ENCODE measurements at regions of chr15 and their contacts with region 1.

Region 1: DNA sequence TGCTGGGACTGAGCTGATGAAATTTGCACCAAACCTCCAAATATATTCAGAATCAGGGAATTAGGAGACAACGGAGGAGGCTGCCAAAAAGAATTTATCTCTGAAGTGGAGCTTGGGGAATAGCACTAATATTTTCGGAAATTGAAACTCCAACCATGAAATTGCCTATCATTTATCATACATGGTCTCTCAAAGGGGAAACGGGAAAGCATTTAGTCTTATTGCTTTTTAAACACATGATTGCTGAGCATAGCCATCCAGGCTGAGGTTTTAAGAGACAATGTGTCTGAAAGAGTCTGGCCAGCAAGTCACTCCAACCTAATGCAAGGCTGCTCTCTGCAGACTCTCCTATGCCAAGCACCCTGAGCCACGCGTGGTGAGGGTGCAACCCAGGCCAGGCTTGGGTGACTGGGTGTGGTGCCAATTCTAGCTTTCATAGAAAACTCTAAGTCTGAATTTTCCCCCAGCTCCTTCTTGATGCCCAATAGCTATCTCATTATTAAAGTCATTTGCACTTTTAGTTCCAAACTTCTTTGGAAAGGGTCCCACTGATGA is 200.2 kb downstream of the RPLP1 start:
- DNase-seq: no peak
- H3K4me3 ChIP-seq: no peak overlapping the region
- H3K27ac ChIP-seq: no peak overlapping the region
- H3K4me1 ChIP-seq: no peaks in the 10 kb centered on the region
- H3K27me3 ChIP-seq: peaks cover 0 to 4% of the 10 kb centered on the region in 2 donors
- CTCF ChIP-seq: peak; percentile 50 to 67

Region 2: DNA sequence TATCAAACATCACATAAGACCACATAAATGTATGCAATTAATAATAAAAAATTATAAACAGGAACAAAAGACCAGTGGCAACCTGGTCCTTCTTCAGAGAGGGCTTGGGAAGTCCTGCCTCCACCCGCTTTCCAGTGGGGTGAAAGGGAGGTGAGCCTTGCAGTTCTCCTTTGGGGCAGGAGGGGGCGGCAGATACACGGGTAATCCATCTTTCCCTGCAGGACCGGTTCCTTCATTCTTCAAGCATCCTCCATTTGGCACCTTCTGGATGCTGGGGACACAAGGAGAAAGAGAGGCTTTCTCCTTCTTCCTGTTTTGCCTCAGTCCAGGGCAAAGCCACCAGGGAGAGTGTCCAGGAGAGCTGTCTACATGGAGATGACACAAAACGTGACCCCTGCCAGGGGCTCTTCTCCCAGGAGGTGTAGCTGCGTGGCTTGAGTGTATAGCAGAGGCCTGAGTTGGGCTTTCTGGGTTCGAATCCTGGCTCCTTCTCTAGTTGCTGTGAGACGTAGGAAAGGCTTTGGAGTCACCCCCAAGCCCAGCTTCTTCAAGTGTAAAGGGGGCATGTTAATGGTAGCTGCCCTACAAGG is 177.0 kb before region 1 on chr15:
- intact Hi-C with region 1: loop called (anchors 5 kb)
- DNase-seq: peak; percentile 77 to 85
- H3K4me3 ChIP-seq: no peak overlapping the region
- H3K27ac ChIP-seq: no peak overlapping the region
- H3K4me1 ChIP-seq: peaks cover 0 to 5% (median 0%) of the 10 kb centered on the region in 4 donors
- H3K27me3 ChIP-seq: peaks cover 0 to 6% of the 10 kb centered on the region in 2 donors
- CTCF ChIP-seq: peak; percentile 89 to 94

Region 3: GRCh38 chr15:69523010-69524001 is 129.5 kb before region 1 on chr15:
- intact Hi-C with region 1: loop called (anchors 5 kb)
- DNase-seq: peak; percentile 78 to 84
- H3K4me3 ChIP-seq: no peak overlapping the region
- H3K27ac ChIP-seq: no peak overlapping the region
- H3K4me1 ChIP-seq: no peaks in the 10 kb centered on the region
- H3K27me3 ChIP-seq: no peaks in the 10 kb centered on the region
- CTCF ChIP-seq: peak; percentile 65 to 70

Region 4: DNA sequence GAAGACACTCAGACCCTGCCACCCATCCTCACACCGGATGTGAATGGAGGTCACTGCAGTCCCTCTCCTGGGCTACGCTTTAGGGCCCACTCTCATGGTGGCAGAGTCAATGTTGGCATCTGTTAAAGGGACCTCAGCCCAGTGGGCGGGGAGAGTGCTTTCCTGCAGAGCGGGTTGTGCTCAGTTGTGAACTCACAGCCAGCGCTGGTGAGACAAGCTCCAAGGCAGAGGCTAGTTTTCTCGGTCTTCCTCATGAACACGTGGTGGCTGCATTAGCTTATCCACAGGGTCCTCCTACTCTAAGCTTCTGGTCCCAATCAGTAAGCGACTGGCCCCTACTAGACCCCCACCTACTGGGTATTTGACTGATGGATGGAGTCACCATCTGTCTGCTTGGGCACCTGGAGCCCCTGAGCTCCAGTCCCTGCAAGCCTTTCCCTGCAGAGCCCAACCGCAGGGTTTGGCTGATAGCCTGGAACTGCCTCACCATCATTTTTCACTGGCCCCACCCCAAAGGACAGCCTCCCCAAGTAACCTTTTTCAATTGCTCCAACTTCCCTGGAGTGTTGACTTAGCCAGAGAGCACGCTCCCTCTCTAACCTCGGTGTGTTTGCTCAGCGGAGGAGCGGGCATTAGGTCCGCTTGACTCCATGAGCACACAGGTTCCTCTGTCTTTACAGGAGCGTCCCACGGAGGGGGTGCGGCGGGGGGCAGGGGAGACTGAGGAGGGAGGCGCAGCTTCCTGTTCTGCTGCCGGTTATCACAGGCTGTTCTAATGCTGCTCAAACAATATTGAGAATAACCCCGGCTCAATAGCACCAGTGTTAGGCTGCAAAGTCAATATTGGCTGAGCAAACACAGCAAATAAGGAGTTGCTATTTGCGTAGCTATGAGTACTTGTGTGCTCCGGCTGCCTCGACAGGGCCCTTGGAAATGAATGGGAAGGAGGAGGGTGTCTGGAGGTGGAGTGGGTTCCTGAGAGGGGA is 58.6 kb before region 1 on chr15:
- intact Hi-C with region 1: no loop called
- DNase-seq: peak; percentile 68 to 94
- H3K4me3 ChIP-seq: peak overlapping the region; percentile 13 to 17
- H3K27ac ChIP-seq: peak overlapping the region; percentile 75 to 77
- H3K4me1 ChIP-seq: peaks cover 7 to 41% (median 31%) of the 10 kb centered on the region in 4 donors
- H3K27me3 ChIP-seq: no peaks in the 10 kb centered on the region
- CTCF ChIP-seq: no peak

Region 5: GRCh38 chr15:69685512-69686452 is 33.0 kb after region 1 on chr15:
- intact Hi-C with region 1: no loop called
- DNase-seq: no peak
- H3K4me3 ChIP-seq: no peak overlapping the region
- H3K27ac ChIP-seq: no peak overlapping the region
- H3K4me1 ChIP-seq: peaks cover 0 to 3% (median 0%) of the 10 kb centered on the region in 4 donors
- H3K27me3 ChIP-seq: peaks cover 0 to 6% of the 10 kb centered on the region in 2 donors
- CTCF ChIP-seq: no peak

Region 6: GRCh38 chr15:69794645-69795461 is 142.0 kb after region 1 on chr15:
- intact Hi-C with region 1: no loop called
- DNase-seq: peak; percentile 85 to 89
- H3K4me3 ChIP-seq: peak overlapping the region in 1 of 2 donors; percentile 13
- H3K27ac ChIP-seq: peak overlapping the region; percentile 83 to 92
- H3K4me1 ChIP-seq: peaks cover 0 to 41% (median 27%) of the 10 kb centered on the region in 4 donors
- H3K27me3 ChIP-seq: no peaks in the 10 kb centered on the region
- CTCF ChIP-seq: no peak